Sigmoid colon (tissue), 7 donors: ENCODE measurements at regions of chr6 and their contacts with region 1.

Region 1: DNA sequence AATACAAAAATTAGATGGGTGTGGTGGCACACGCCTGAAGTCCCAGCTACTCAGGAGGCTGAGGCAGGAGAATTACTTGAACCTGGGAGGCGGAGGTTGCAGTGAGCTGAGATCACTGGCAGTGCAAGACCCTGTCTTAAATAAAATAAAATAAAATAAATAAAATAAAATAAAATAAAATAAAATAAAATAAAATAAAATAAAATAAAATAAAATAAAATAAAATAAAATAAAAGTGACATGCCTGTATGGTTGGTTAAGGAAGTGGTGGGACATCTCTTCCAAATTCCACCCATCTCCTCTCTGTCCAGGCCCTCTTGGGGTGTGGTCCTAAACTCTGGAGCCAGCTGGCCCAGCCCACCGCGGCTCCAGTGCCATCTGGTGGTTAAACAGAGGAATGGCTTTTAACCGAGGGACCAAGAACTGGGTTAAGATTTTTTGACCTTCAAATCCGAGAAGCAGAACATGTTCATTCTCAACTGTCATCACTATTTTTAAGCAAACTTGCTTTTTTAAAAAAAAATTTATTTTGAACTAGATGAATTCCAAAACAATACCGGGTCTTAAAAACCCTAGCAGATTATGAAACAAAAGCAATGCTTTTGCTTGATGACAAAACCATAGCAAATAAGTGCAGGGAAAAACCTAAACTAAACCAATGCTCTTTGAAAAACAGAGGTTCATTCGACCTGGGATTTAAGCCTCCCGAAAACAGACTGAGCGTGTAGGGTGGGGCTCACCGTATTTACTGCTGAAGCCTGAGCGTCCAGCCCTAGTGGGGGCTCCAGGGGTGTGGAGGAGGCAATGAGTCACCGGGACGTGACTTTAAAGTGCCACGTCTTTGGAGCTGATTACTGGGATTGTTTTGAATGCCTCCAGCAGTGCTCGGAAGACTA is 68.8 kb downstream of the CDC5L start:
- DNase-seq: no peak
- H3K4me3 ChIP-seq: peak overlapping the region in 2 of 4 donors; percentile 4 to 13
- H3K27ac ChIP-seq: no peak overlapping the region
- H3K4me1 ChIP-seq: peaks cover 0 to 11% (median 8%) of the 10 kb centered on the region in 4 donors
- H3K27me3 ChIP-seq: no peaks in the 10 kb centered on the region
- CTCF ChIP-seq: peak in 3 of 4 experiments; percentile 47 to 78 (median 77)
- EP300 ChIP-seq: no peak
- POLR2A ChIP-seq: no peak

Region 2: GRCh38 chr6:44431118-44431725 is 25.1 kb before region 1 on chr6:
- intact Hi-C with region 1: loop called (anchors 2 kb)
- DNase-seq: no peak
- H3K4me3 ChIP-seq: no peak overlapping the region
- H3K27ac ChIP-seq: no peak overlapping the region
- H3K4me1 ChIP-seq: peaks cover 0 to 43% (median 31%) of the 10 kb centered on the region in 4 donors
- H3K27me3 ChIP-seq: no peaks in the 10 kb centered on the region
- CTCF ChIP-seq: peak; percentile 32 to 65 (median 64)
- EP300 ChIP-seq: no peak
- POLR2A ChIP-seq: no peak

Region 3: GRCh38 chr6:44527181-44527580 is 70.9 kb after region 1 on chr6:
- intact Hi-C with region 1: no loop called
- DNase-seq: no peak
- H3K4me3 ChIP-seq: no peak overlapping the region
- H3K27ac ChIP-seq: no peak overlapping the region
- H3K4me1 ChIP-seq: no peaks in the 10 kb centered on the region
- H3K27me3 ChIP-seq: peaks cover 0 to 4% (median 0%) of the 10 kb centered on the region in 3 donors
- CTCF ChIP-seq: no peak
- EP300 ChIP-seq: no peak
- POLR2A ChIP-seq: no peak

Region 4: DNA sequence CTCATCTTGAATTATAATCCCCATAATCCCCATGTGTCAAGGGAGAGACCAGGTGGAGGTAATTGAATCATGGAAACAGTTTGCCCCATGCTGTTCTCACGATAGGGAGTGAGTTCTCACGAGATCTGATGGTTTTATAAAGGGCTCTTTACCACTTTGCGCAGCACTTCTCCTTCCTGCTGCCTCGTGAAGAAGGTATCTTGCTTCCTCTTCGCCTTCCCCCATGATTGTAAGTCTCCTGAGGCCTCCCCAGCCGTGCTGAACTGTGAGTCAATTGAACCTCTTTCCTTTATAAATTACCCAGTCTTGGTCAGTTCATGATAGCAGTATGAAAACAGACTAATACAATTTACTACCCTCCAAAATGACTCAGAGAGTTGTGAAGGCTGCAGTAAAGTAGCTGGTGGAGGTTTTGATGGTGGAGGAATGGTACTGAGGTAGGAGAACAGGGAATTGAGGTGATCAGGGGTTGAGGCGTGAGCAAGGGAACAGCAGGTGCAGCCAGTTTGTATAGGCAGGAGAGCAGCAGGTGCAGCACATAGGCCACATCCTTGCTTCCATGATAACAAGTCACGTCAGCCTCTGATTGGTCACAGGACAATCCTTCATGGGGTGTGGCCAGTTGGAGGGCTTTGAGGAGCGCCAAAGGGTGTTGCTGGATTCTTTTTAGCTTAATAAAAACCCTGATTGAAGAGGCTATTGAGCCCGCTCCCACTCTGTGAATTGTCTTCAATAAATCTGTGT is 81.2 kb after region 1 on chr6:
- intact Hi-C with region 1: no loop called
- DNase-seq: no peak
- H3K4me3 ChIP-seq: no peak overlapping the region
- H3K27ac ChIP-seq: no peak overlapping the region
- H3K4me1 ChIP-seq: no peaks in the 10 kb centered on the region
- H3K27me3 ChIP-seq: no peaks in the 10 kb centered on the region
- CTCF ChIP-seq: no peak
- EP300 ChIP-seq: no peak
- POLR2A ChIP-seq: no peak